Activated naive CD4-positive, alpha-beta T cell treated with anti-CD3 and anti-CD28 coated beads, Interleukin-2, amount 10 ng/mL, durations not matched to agents 7 days and 5 days (primary cell): ENCODE measurements at regions of chr10 and their contacts with region 1.

Region 1: DNA sequence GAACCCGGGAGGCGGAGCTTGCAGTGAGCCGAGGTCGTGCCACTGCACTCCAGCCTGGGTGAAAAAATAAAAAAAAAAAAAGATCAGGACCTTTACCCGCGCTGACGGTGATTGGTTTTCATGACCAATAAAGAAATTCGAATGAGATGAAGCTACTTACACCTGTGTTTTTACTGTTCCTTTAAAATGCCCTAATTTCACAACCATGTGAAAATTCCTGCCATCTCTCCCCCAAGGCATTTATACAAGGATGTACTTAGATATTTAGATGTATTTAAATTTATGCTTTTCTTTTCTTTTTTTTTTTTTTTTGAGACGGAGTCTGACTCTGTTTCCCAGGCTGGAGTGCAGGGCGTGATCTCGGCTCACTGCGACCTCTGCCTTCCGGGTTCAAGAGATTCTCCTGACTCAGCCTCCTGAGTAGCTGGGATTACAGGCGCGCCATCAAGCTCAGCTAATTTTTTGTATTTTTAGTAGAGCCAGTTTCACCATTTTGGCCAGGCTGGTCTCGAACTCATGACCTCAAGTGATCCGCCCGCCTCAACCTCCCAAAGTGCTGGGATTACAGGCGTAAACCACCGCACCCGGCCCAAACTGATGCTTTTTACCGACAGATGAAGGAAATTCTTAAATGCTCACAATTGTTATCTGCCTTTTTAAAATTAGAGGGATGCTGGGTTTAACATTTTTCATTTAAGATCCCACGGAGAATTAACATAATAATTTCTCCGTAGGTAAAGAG is 3.1 kb upstream of the PHYH start:
- DNase-seq: no peak
- H3K4me3 Mint-ChIP-seq: peak overlapping the region; percentile 75
- H3K27ac Mint-ChIP-seq: peak overlapping the region; percentile 100
- H3K4me1 Mint-ChIP-seq: peaks cover 29% of the 10 kb centered on the region
- H3K27me3 Mint-ChIP-seq: no peaks in the 10 kb centered on the region

Region 2: GRCh38 chr10:12854988-12855387 is 448.0 kb before region 1 on chr10:
- CTCF ChIA-PET with region 1: no interaction called
- DNase-seq: no peak
- H3K4me3 Mint-ChIP-seq: no peak overlapping the region
- H3K27ac Mint-ChIP-seq: no peak overlapping the region
- H3K4me1 Mint-ChIP-seq: no peaks in the 10 kb centered on the region
- H3K27me3 Mint-ChIP-seq: peaks cover 7% of the 10 kb centered on the region

Region 3: GRCh38 chr10:13160934-13161856 is 141.8 kb before region 1 on chr10 and contains the start of gene MCM10:
- CTCF ChIA-PET with region 1: interaction called, 13 read pairs
- DNase-seq: peak; percentile 99
- H3K4me3 Mint-ChIP-seq: peak within 1 kb of the TSS; percentile 88
- H3K27ac Mint-ChIP-seq: peak within 1 kb of the TSS; percentile 81
- H3K4me1 Mint-ChIP-seq: peaks cover 34% of the 10 kb centered on the region
- H3K27me3 Mint-ChIP-seq: no peaks in the 10 kb centered on the region

Region 4: DNA sequence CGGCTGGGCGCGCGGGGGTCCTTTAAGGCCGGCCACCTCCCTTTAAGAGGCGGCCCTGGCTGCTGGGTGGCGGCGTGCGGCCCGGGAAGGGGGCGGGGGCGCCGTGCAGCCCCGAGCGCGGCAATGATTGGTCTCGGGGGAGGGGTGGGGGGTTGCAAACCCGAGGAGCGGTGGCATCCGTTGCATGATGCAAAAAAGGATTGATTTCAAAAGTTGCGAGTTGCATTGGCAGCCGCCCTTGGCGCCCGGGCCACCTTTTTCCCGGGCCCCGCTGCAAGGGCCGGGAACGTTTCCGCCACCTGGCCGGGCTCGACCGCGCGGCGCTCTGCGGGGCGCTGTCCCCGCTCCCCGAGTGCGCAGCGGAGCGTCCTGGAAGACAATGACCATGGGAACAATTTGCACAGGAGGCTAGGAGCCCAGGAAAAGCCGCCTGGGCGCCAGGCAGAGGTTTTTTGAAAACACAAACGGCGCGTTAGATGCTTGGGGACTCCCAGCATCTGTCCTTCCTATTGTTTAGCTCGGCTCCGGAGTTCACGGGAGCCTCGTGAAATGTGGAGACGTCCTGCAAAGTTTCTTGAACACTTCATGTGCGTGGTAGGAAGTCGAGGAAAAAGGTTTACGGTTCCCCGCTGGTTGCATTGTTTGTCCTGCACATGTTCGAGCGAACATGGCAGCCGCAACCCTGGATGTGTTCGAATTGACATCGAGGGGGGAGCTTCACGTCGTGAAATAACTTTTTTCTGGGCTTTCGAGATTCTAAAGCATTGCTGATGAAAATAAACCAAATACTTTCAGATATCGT is 45.4 kb after region 1 on chr10 and contains the start of gene SEPHS1:
- CTCF ChIA-PET with region 1: interaction called, 17 read pairs
- DNase-seq: peak; percentile 89
- H3K4me3 Mint-ChIP-seq: peak within 1 kb of the TSS; percentile 93
- H3K27ac Mint-ChIP-seq: peak within 1 kb of the TSS; percentile 99
- H3K4me1 Mint-ChIP-seq: peaks cover 73% of the 10 kb centered on the region
- H3K27me3 Mint-ChIP-seq: peaks cover 9% of the 10 kb centered on the region

Region 5: GRCh38 chr10:13485623-13486022 is 182.6 kb after region 1 on chr10:
- CTCF ChIA-PET with region 1: no interaction called
- DNase-seq: no peak
- H3K4me3 Mint-ChIP-seq: no peak overlapping the region
- H3K27ac Mint-ChIP-seq: no peak overlapping the region
- H3K4me1 Mint-ChIP-seq: no peaks in the 10 kb centered on the region
- H3K27me3 Mint-ChIP-seq: peaks cover 9% of the 10 kb centered on the region